Sciatic nerve (tissue), 2 donors: ENCODE measurements at regions of chr1 and their contacts with region 1.

Region 1: GRCh38 chr1:170749959-170750358 is 86.0 kb downstream of the PRRX1 start:
- DNase-seq: no peak
- ATAC-seq: no peak

Region 2: DNA sequence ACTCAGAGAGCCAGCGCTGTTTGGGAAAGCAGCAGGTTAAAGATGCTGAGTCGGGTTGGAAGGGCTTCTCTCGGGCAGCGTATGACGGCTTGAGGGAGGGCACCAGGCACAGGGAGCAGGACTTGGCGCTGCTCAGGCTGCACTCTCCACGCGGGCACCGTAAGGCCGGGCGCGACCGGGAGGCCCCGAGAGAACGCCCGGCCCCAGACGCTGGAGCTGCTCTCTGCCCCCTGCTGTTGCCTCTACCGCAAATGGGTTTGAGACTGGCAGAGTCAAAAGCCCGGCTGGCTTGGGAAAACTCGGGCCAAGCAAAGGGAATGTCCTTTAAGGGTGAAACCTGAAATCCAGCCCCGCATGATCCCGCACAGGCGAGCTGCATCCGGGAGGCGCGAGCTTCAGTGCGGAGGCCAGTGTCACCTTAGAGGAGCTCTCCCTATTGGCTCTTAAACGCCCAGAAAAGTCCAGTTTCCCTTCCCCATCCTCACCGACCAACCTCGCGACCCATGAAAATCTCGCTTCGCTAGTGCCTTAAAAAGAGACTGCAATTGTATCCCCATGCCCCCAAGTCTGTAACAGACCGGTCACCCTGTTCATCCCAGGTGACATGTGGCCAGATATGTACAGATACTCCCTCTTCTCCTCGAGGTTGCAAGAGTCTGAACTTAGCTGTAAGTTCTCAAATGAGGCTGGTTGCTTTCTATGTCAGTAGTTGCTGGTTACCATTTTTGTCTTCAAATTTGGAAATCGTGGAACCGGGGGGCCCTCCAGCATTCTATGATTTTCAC is 84.9 kb before region 1 on chr1:
- intact Hi-C with region 1: loop called (anchors 5 kb)
- DNase-seq: no peak
- ATAC-seq: peak; percentile 44

Region 3: DNA sequence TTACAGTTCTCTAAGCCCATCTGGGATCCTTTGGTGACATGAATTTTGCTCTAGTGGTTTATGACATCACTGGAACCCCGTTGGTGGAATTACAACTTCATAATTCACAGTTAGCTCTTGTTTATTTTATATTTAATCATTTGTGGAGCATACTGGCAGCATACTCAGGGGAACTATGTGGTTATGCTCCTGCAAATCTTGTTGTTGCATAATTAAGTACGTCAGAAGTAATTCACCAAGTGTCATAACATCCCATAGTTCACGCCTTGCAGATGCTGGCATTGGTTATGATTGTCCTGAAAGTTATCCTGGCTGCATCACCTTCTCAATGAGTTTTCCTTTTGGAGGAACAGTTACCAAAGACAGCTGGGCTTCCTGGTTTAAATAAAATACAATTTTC is 69.5 kb before region 1 on chr1:
- intact Hi-C with region 1: no loop called
- DNase-seq: no peak
- ATAC-seq: peak; percentile 58

Region 4: GRCh38 chr1:171116676-171117075 is 366.7 kb after region 1 on chr1:
- intact Hi-C with region 1: no loop called
- DNase-seq: no peak
- ATAC-seq: no peak